CD8-positive, alpha-beta memory T cell (primary cell): ENCODE measurements at regions of chr2 and their contacts with region 1.

Region 1: DNA sequence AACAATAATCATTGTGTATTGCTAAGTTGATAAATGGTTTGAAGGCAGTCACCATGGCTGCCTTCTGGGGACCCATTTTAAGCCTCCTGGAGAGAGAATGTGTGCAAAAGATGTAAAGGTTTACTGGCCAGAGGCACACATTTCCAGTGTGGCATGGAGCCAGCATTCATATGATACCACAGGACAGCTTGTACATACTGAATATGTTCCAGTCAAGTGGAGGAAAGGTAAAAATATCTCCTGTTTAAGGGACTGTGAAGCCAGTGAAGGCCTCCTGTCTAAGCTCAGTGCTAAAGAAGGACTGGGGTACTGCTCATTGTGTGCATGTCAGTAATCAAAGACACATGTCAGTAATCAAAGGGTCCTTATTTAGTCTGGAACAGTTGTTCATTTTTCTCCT is 119.2 kb downstream of the BABAM2 start:
- DNase-seq: no peak
- H3K4me3 ChIP-seq: no peak overlapping the region
- H3K4me3 Mint-ChIP-seq: no peak overlapping the region
- H3K27ac ChIP-seq: no peak overlapping the region
- H3K27ac Mint-ChIP-seq: peak overlapping the region in 1 of 8 donors; percentile 60
- H3K4me1 ChIP-seq: no peaks in the 10 kb centered on the region
- H3K4me1 Mint-ChIP-seq: peaks cover 0 to 4% (median 0%) of the 10 kb centered on the region in 3 donors
- H3K27me3 ChIP-seq: no peaks in the 10 kb centered on the region
- H3K27me3 Mint-ChIP-seq: no peaks in the 10 kb centered on the region

Region 2: DNA sequence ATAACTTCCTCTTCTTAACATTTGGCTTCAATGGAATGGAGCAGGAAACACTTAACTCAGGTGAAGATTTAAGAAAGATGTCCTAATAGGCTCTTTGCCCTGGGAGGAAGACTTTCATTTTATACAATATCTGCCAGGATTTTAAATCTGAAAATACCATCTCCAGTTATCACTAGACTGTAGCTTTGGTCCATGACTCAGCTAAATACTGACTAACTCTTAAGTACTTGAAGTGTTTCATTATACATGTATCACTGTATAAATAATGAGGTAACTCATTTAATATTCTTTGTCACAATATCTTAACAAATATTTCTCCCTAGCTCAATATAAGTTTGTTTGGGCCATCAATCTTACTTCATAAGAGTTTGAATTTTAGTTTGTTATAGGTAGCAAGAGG is 154.3 kb before region 1 on chr2:
- CTCF ChIA-PET with region 1: no interaction called
- POLR2A ChIA-PET with region 1: no interaction called
- DNase-seq: no peak
- H3K4me3 ChIP-seq: no peak overlapping the region
- H3K4me3 Mint-ChIP-seq: no peak overlapping the region
- H3K27ac ChIP-seq: no peak overlapping the region
- H3K27ac Mint-ChIP-seq: no peak overlapping the region
- H3K4me1 ChIP-seq: no peaks in the 10 kb centered on the region
- H3K4me1 Mint-ChIP-seq: peaks cover 0 to 4% (median 0%) of the 10 kb centered on the region in 3 donors
- H3K27me3 ChIP-seq: no peaks in the 10 kb centered on the region
- H3K27me3 Mint-ChIP-seq: no peaks in the 10 kb centered on the region

Region 3: GRCh38 chr2:27932396-27932795 is 77.3 kb before region 1 on chr2:
- CTCF ChIA-PET with region 1: no interaction called
- POLR2A ChIA-PET with region 1: interaction called, 10 read pairs
- DNase-seq: no peak
- H3K4me3 ChIP-seq: no peak overlapping the region
- H3K4me3 Mint-ChIP-seq: no peak overlapping the region
- H3K27ac ChIP-seq: no peak overlapping the region
- H3K27ac Mint-ChIP-seq: peak overlapping the region in 2 of 8 donors; percentile 3 to 10
- H3K4me1 ChIP-seq: no peaks in the 10 kb centered on the region
- H3K4me1 Mint-ChIP-seq: peaks cover 9 to 17% (median 13%) of the 10 kb centered on the region in 3 donors
- H3K27me3 ChIP-seq: no peaks in the 10 kb centered on the region
- H3K27me3 Mint-ChIP-seq: no peaks in the 10 kb centered on the region

Region 4: GRCh38 chr2:28080911-28081310 is 71.2 kb after region 1 on chr2:
- CTCF ChIA-PET with region 1: no interaction called
- POLR2A ChIA-PET with region 1: no interaction called
- DNase-seq: no peak
- H3K4me3 ChIP-seq: no peak overlapping the region
- H3K4me3 Mint-ChIP-seq: no peak overlapping the region
- H3K27ac ChIP-seq: no peak overlapping the region
- H3K27ac Mint-ChIP-seq: no peak overlapping the region
- H3K4me1 ChIP-seq: peaks cover 14% of the 10 kb centered on the region
- H3K4me1 Mint-ChIP-seq: peaks cover 0 to 21% (median 19%) of the 10 kb centered on the region in 3 donors
- H3K27me3 ChIP-seq: no peaks in the 10 kb centered on the region
- H3K27me3 Mint-ChIP-seq: no peaks in the 10 kb centered on the region

Region 5: DNA sequence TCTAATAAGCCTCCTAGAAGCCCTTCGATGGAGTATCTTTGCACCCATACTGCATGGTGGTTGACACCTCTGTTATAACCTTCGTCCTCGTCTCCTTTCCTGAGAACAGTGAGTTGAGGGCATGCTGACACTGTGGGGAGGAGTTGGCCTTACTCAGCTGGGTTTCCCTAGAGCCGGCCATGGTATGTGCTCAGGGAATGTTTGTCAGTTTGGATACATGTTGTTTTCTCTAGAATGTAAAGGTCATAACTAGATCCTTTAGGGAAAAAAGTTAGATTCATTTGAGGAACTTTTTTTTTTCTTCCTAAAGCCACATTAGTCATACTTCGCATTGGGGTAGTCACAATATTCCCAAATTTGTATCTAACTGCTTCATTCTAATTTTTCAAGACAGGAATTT is 276.9 kb after region 1 on chr2:
- CTCF ChIA-PET with region 1: no interaction called
- POLR2A ChIA-PET with region 1: no interaction called
- DNase-seq: no peak
- H3K4me3 ChIP-seq: no peak overlapping the region
- H3K4me3 Mint-ChIP-seq: no peak overlapping the region
- H3K27ac ChIP-seq: no peak overlapping the region
- H3K27ac Mint-ChIP-seq: peak overlapping the region in 2 of 8 donors; percentile 24 to 50
- H3K4me1 ChIP-seq: no peaks in the 10 kb centered on the region
- H3K4me1 Mint-ChIP-seq: peaks cover 0 to 3% (median 3%) of the 10 kb centered on the region in 3 donors
- H3K27me3 ChIP-seq: no peaks in the 10 kb centered on the region
- H3K27me3 Mint-ChIP-seq: no peaks in the 10 kb centered on the region